MCF 10A (cell line): ENCODE measurements at regions of chr9 and their contacts with region 1.

Region 1: DNA sequence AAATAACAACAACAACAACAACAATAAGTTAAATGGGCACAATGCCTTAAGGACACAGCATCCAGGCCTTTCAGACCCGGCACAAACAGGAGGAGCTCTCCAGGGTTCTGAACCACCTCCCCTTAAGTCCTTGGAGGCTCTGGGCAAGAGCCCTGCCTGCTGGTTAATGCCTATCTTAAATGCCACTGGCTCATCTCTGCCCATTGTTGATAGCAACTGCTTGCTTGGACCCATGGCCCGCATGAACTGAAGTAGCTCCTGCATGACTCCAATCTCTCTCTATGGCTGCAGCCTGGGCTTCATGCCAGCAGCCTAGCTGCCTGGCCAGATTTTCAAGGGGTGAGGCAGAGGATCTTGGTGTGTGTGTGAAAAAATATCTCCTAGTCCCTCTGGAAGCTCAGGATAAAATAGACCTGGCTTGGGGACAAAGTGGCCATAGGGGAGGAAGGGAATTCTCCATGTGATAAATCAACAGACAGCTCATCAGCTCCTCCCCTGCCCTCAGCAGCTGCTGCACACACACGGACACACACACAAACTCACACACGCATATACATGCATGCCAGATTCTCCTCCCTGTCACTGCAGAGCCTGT is 27.4 kb downstream of the FAM219A start:
- DNase-seq: peak; percentile 70
- H3K4me3 Mint-ChIP-seq: no peak overlapping the region
- H3K27ac Mint-ChIP-seq: no peak overlapping the region
- H3K4me1 Mint-ChIP-seq: no peaks in the 10 kb centered on the region
- H3K27me3 Mint-ChIP-seq: no peaks in the 10 kb centered on the region
- CTCF ChIP-seq: no peak

Region 2: DNA sequence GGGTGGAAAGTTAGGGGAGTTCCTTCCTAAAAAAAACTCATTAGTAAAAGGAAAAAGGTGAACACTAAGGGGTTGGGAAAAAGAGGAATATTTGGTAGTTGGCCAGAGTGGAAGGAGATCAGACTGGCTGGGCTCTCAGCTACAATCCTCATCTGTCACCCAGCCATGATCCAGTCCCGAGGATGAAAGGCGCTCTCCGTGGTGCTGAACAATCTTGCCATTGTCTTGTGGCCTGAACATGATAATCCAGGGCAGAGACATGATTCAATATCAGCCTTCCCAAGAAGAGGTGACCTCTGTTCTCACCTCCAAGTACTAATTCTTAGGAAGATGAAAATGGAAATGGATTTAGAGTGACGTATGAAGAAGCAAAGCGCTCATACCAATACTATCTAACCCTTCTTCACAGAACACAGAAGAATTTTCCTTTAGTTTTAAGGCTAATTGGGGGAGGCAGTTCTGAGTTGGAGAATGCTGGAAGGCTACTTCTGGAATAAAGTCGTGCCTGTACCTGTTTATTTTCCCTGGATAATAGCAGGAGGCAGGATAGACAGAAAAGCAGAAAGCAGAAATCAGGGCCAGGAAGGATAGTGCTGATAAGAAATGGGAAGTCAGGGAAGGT is 17.6 kb before region 1 on chr9:
- CTCF ChIA-PET with region 1: interaction called, 11 read pairs
- POLR2A ChIA-PET with region 1: interaction called, 3 read pairs
- intact Hi-C with region 1: no loop called
- DNase-seq: peak; percentile 74
- H3K4me3 Mint-ChIP-seq: no peak overlapping the region
- H3K27ac Mint-ChIP-seq: no peak overlapping the region
- H3K4me1 Mint-ChIP-seq: no peaks in the 10 kb centered on the region
- H3K27me3 Mint-ChIP-seq: no peaks in the 10 kb centered on the region
- CTCF ChIP-seq: no peak

Region 3: GRCh38 chr9:34513567-34514214 is 82.8 kb after region 1 on chr9:
- CTCF ChIA-PET with region 1: no interaction called
- POLR2A ChIA-PET with region 1: no interaction called
- intact Hi-C with region 1: no loop called
- DNase-seq: no peak
- H3K4me3 Mint-ChIP-seq: no peak overlapping the region
- H3K27ac Mint-ChIP-seq: no peak overlapping the region
- H3K4me1 Mint-ChIP-seq: no peaks in the 10 kb centered on the region
- H3K27me3 Mint-ChIP-seq: peaks cover 16% of the 10 kb centered on the region
- CTCF ChIP-seq: no peak